CD14-positive monocyte (primary cell): ENCODE measurements at regions of chr10 and their contacts with region 1.

Region 1: GRCh38 chr10:22436884-22437619 is 91.8 kb downstream of the SPAG6 start:
- DNase-seq: peak; percentile 87 to 88 (median 87)
- H3K4me3 ChIP-seq: peak overlapping the region; percentile 56 to 84 (median 78)
- H3K4me3 Mint-ChIP-seq: peak overlapping the region; percentile 96 to 97
- H3K27ac ChIP-seq: peak overlapping the region; percentile 87 to 93
- H3K27ac Mint-ChIP-seq: peak overlapping the region; percentile 91 to 97 (median 94)
- H3K4me1 ChIP-seq: peaks cover 28 to 46% of the 10 kb centered on the region in 2 donors
- H3K4me1 Mint-ChIP-seq: peaks cover 37% of the 10 kb centered on the region
- H3K27me3 ChIP-seq: peaks cover 10 to 35% of the 10 kb centered on the region in 2 donors
- H3K27me3 Mint-ChIP-seq: peaks cover 19 to 46% (median 24%) of the 10 kb centered on the region in 3 donors
- CTCF ChIP-seq: no peak

Region 2: DNA sequence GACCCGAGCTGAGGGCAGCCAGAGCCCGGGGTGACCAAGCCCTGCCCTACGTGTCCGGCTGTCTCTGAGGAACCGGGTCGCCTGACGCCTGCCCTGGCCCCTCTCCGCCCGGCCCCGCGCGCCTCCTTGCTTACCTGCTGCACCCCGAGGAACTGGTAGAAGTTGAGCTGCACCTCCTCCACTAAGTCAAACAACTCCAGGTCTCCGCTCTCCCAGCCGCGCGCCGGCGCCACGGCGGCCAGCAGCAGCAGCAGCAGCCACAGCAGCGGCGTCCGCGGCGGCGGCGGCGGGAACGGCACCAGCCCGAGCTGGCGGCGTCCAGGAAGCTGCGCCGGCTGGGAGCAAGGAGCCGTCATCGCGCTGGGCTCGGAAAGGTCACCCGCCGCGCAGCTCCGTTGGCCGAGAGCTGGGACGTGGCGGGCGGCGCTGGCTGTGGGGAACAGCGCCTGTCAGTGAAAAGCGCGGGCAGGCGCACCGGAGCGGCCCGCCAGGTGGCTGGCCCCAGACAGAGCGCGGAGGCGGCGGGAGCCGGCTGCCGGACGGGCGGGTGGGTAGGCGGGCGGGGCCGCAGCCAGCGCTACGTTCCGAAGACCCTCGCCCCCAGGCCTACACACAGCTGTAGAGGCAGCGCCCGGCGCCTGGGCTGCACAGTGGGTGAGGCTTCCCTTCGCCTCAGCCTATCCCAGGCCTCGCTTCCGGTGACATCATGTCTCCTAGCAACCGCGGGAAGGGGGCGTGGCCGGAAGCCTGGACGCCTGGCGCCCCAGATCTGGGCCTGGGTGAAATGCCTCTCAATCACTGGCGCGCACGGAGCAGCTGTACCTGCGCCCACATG is 433.8 kb before region 1 on chr10 and contains the start of gene DNAJC1:
- intact Hi-C with region 1: loop called (anchors 5 to 10 kb)
- DNase-seq: peak; percentile 92 to 95 (median 93)
- H3K4me3 ChIP-seq: peak within 1 kb of the TSS; percentile 56 to 90 (median 83)
- H3K4me3 Mint-ChIP-seq: peak within 1 kb of the TSS; percentile 92 to 99
- H3K27ac ChIP-seq: peak within 1 kb of the TSS; percentile 85 to 87
- H3K27ac Mint-ChIP-seq: peak within 1 kb of the TSS; percentile 85 to 94 (median 92)
- H3K4me1 ChIP-seq: peaks cover 17 to 24% of the 10 kb centered on the region in 2 donors
- H3K4me1 Mint-ChIP-seq: peaks cover 31% of the 10 kb centered on the region
- H3K27me3 ChIP-seq: no peaks in the 10 kb centered on the region
- H3K27me3 Mint-ChIP-seq: peaks cover 0 to 1% (median 0%) of the 10 kb centered on the region in 3 donors
- CTCF ChIP-seq: peak; percentile 15
- polyA plus RNA-seq, gene DNAJC1: 11.4 to 12.9 (median 12.5) TPM

Region 3: GRCh38 chr10:22251751-22252223 is 185.3 kb before region 1 on chr10:
- intact Hi-C with region 1: loop called in 1 of 2 experiments (anchors 5 kb)
- DNase-seq: peak; percentile 72 to 77 (median 73)
- H3K4me3 ChIP-seq: peak overlapping the region; percentile 67 to 93 (median 90)
- H3K4me3 Mint-ChIP-seq: peak overlapping the region; percentile 91 to 98
- H3K27ac ChIP-seq: peak overlapping the region; percentile 94 to 97
- H3K27ac Mint-ChIP-seq: peak overlapping the region; percentile 96 to 100 (median 100)
- H3K4me1 ChIP-seq: peaks cover 5 to 11% of the 10 kb centered on the region in 2 donors
- H3K4me1 Mint-ChIP-seq: peaks cover 23% of the 10 kb centered on the region
- H3K27me3 ChIP-seq: no peaks in the 10 kb centered on the region
- H3K27me3 Mint-ChIP-seq: peaks cover 0 to 7% (median under 1%) of the 10 kb centered on the region in 3 donors
- CTCF ChIP-seq: no peak

Region 4: DNA sequence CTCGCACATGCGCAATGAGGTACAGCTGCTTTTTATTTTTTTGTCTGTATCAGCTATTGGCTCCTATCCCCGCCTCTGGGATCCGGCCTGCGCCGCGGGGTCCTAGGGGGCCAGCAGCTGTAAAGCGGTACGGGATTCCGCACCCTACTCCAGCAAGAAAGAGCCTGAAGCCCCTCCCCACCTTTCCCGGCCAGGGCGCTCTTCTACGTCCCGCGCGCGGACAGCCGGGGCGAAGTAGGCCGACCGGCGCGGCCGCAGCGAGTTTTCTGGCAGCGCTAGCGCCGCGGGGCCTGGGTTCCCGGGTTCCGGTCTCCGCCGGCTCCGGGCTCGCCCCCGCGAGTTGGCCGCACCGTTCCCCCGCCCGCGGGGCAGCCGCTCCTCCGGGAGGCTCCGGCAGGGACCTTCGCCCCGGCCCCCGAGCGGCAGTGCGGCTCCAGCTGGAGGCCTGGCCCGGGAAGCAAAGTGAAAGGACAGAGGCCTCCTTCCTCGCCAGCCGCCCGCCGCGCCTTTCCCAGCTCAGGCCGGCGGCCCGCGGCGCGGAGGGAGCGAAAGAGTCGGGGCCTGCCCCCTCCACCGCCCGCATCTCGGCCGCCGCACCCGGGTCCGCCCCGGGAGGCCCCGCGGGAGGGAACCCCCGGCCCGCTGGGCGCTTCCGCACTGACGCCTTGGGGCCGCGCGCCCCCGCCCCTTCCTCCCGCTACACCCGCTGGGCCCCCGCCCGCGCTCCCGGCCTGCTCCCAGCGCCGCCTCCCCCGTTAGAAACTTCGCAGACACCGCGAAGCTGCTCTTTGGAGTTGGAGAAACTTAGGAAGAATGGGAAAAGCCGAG is 96.5 kb before region 1 on chr10:
- intact Hi-C with region 1: loop called (anchors 10 kb)
- DNase-seq: peak; percentile 50 to 77 (median 75)
- H3K4me3 ChIP-seq: peak overlapping the region; percentile 50 to 87 (median 76)
- H3K4me3 Mint-ChIP-seq: peak overlapping the region; percentile 90 to 94
- H3K27ac ChIP-seq: peak overlapping the region; percentile 77 to 80
- H3K27ac Mint-ChIP-seq: peak overlapping the region; percentile 88 to 97 (median 95)
- H3K4me1 ChIP-seq: peaks cover 34 to 41% of the 10 kb centered on the region in 2 donors
- H3K4me1 Mint-ChIP-seq: peaks cover 42% of the 10 kb centered on the region
- H3K27me3 ChIP-seq: peaks cover 76 to 90% of the 10 kb centered on the region in 2 donors
- H3K27me3 Mint-ChIP-seq: peaks cover 82 to 93% (median 85%) of the 10 kb centered on the region in 3 donors
- CTCF ChIP-seq: no peak

Region 5: DNA sequence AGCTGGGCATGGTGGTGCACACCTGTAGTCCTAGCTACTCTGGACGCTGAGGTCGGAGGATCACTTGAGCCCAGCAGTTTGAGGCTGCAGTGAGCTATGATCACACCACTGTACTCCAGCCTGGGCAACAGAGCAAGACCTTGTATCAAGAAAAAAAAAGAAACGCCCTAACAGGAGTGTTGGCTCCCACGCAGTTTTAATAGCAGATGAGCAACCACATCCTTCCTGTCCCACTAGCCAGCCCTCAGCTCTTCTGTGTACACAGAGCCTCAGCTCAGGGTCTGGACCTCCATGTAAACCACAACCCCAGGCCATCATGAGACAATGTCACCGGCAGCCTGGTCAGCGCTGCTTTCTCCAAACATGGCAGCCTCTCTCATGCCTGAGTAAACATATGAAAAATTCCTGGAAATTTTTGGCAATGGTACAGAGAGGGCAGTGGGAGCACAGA is 169.1 kb after region 1 on chr10:
- intact Hi-C with region 1: loop called in 1 of 2 experiments (anchors 10 kb)
- DNase-seq: peak; percentile 79 to 83 (median 83)
- H3K4me3 ChIP-seq: peak overlapping the region in 1 of 3 experiments; percentile 67
- H3K4me3 Mint-ChIP-seq: peak overlapping the region; percentile 35 to 75
- H3K27ac ChIP-seq: peak overlapping the region; percentile 79 to 93
- H3K27ac Mint-ChIP-seq: peak overlapping the region; percentile 86 to 98 (median 94)
- H3K4me1 ChIP-seq: peaks cover 56 to 66% of the 10 kb centered on the region in 2 donors
- H3K4me1 Mint-ChIP-seq: peaks cover 60% of the 10 kb centered on the region
- H3K27me3 ChIP-seq: no peaks in the 10 kb centered on the region
- H3K27me3 Mint-ChIP-seq: no peaks in the 10 kb centered on the region
- CTCF ChIP-seq: no peak

Region 6: DNA sequence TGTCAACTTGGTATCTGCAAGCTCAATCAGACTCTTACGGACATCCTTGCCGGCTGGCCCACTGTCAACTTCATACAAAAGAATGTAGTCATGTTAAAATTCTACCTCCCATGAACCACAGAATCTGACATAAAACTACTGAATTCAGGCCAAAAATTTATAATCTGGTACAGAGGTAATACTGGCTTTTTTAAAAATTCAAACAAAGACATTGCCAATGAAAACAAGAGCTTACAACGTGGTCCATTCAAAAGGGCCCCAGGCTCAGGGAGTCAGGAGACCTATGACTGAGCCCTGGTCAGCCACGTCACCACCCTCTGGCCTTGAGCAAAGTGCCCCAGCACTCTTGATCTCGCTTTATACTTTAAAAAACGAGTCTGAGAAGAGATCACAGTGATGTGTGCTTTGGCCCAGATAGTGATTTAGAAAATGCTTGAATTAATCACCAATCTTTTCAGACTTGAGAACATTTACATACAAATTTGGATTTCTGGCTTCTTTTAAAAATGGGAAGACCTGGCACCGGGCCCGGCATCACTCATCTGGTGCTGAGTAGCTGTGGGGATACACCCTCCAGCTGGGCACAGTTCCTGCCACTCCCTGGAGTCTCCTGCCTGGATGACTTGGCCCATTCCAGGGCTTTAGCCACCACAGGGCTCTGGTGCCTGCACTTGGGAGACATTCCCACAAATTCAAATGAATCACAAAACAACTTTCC is 183.2 kb after region 1 on chr10:
- intact Hi-C with region 1: no loop called
- DNase-seq: no peak
- H3K4me3 ChIP-seq: no peak overlapping the region
- H3K4me3 Mint-ChIP-seq: no peak overlapping the region
- H3K27ac ChIP-seq: no peak overlapping the region
- H3K27ac Mint-ChIP-seq: peak overlapping the region in 2 of 7 donors; percentile 43 to 53
- H3K4me1 ChIP-seq: peaks cover 26 to 29% of the 10 kb centered on the region in 2 donors
- H3K4me1 Mint-ChIP-seq: peaks cover 49% of the 10 kb centered on the region
- H3K27me3 ChIP-seq: no peaks in the 10 kb centered on the region
- H3K27me3 Mint-ChIP-seq: peaks cover 0 to 1% (median 0%) of the 10 kb centered on the region in 3 donors
- CTCF ChIP-seq: no peak